Activated B cell treated with CpG ODN at 0.5 μM for 24 hours (primary cell): ENCODE measurements at regions of chr19 and their contacts with region 1.

Region 1: GRCh38 chr19:10730923-10731322 is 13.0 kb downstream of the DNM2 start:
- DNase-seq: no peak
- ATAC-seq: peak; percentile 20
- H3K4me3 Mint-ChIP-seq: peak overlapping the region; percentile 24
- H3K27ac Mint-ChIP-seq: peak overlapping the region; percentile 91
- H3K4me1 Mint-ChIP-seq: peaks cover 65% of the 10 kb centered on the region
- H3K27me3 Mint-ChIP-seq: no peaks in the 10 kb centered on the region
- CTCF ChIP-seq: no peak

Region 2: GRCh38 chr19:10416380-10417257 is 314.3 kb before region 1 on chr19:
- CTCF ChIA-PET with region 1: no interaction called
- POLR2A ChIA-PET with region 1: no interaction called
- intact Hi-C with region 1: no loop called
- DNase-seq: peak; percentile 97
- ATAC-seq: peak; percentile 68
- H3K4me3 Mint-ChIP-seq: peak overlapping the region; percentile 78
- H3K27ac Mint-ChIP-seq: peak overlapping the region; percentile 80
- H3K4me1 Mint-ChIP-seq: peaks cover 70% of the 10 kb centered on the region
- H3K27me3 Mint-ChIP-seq: peaks cover 29% of the 10 kb centered on the region
- CTCF ChIP-seq: peak; percentile 79

Region 3: GRCh38 chr19:10593820-10594637 is 136.9 kb before region 1 on chr19:
- CTCF ChIA-PET with region 1: no interaction called
- POLR2A ChIA-PET with region 1: no interaction called
- intact Hi-C with region 1: no loop called
- DNase-seq: no peak
- ATAC-seq: peak; percentile 51
- H3K4me3 Mint-ChIP-seq: peak overlapping the region; percentile 58
- H3K27ac Mint-ChIP-seq: peak overlapping the region; percentile 74
- H3K4me1 Mint-ChIP-seq: peaks cover 39% of the 10 kb centered on the region
- H3K27me3 Mint-ChIP-seq: no peaks in the 10 kb centered on the region
- CTCF ChIP-seq: no peak

Region 4: GRCh38 chr19:10662384-10663251 is 68.3 kb before region 1 on chr19:
- CTCF ChIA-PET with region 1: no interaction called
- POLR2A ChIA-PET with region 1: no interaction called
- intact Hi-C with region 1: no loop called
- DNase-seq: no peak
- ATAC-seq: peak; percentile 43
- H3K4me3 Mint-ChIP-seq: peak overlapping the region; percentile 67
- H3K27ac Mint-ChIP-seq: peak overlapping the region; percentile 43
- H3K4me1 Mint-ChIP-seq: peaks cover 58% of the 10 kb centered on the region
- H3K27me3 Mint-ChIP-seq: no peaks in the 10 kb centered on the region
- CTCF ChIP-seq: no peak

Region 5: DNA sequence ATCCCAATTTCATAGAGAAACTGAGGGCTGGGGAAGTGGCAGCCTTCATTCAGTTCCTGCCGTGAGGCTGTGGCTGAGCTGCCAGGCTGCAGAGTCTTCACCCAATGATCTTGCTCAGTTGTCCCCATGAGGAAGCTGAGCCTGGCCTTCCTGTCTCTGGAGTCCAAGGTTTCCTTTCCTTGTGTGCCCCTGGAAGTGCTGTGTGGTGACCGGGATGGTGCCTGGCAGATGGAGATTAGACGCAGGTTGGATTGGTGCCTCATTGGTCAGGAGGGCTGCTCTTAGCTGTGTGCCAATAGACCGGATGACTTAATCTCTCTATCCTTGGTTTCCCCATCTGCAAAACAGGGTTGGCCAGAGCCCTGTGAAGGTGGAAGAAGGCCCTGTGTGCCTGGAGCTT is 11.6 kb after region 1 on chr19:
- CTCF ChIA-PET with region 1: interaction called, 3 read pairs
- POLR2A ChIA-PET with region 1: interaction called, 5 read pairs
- intact Hi-C with region 1: loop called (anchors 1 kb)
- DNase-seq: no peak
- ATAC-seq: no peak
- H3K4me3 Mint-ChIP-seq: no peak overlapping the region
- H3K27ac Mint-ChIP-seq: no peak overlapping the region
- H3K4me1 Mint-ChIP-seq: peaks cover 76% of the 10 kb centered on the region
- H3K27me3 Mint-ChIP-seq: no peaks in the 10 kb centered on the region
- CTCF ChIP-seq: no peak

Region 6: GRCh38 chr19:10760273-10760944 is 29.5 kb after region 1 on chr19:
- CTCF ChIA-PET with region 1: interaction called, 3 read pairs
- POLR2A ChIA-PET with region 1: interaction called, 15 read pairs
- intact Hi-C with region 1: loop called (anchors 1 kb)
- DNase-seq: peak; percentile 57
- ATAC-seq: peak; percentile 69
- H3K4me3 Mint-ChIP-seq: peak overlapping the region; percentile 77
- H3K27ac Mint-ChIP-seq: peak overlapping the region; percentile 94
- H3K4me1 Mint-ChIP-seq: peaks cover 87% of the 10 kb centered on the region
- H3K27me3 Mint-ChIP-seq: no peaks in the 10 kb centered on the region
- CTCF ChIP-seq: no peak

Region 7: GRCh38 chr19:10776900-10777650 is 46.2 kb after region 1 on chr19:
- CTCF ChIA-PET with region 1: interaction called, 3 read pairs
- POLR2A ChIA-PET with region 1: interaction called, 9 read pairs
- intact Hi-C with region 1: loop called (anchors 2 kb)
- DNase-seq: no peak
- ATAC-seq: peak; percentile 82
- H3K4me3 Mint-ChIP-seq: peak overlapping the region; percentile 2
- H3K27ac Mint-ChIP-seq: peak overlapping the region; percentile 64
- H3K4me1 Mint-ChIP-seq: peaks cover 46% of the 10 kb centered on the region
- H3K27me3 Mint-ChIP-seq: no peaks in the 10 kb centered on the region
- CTCF ChIP-seq: no peak

Region 8: DNA sequence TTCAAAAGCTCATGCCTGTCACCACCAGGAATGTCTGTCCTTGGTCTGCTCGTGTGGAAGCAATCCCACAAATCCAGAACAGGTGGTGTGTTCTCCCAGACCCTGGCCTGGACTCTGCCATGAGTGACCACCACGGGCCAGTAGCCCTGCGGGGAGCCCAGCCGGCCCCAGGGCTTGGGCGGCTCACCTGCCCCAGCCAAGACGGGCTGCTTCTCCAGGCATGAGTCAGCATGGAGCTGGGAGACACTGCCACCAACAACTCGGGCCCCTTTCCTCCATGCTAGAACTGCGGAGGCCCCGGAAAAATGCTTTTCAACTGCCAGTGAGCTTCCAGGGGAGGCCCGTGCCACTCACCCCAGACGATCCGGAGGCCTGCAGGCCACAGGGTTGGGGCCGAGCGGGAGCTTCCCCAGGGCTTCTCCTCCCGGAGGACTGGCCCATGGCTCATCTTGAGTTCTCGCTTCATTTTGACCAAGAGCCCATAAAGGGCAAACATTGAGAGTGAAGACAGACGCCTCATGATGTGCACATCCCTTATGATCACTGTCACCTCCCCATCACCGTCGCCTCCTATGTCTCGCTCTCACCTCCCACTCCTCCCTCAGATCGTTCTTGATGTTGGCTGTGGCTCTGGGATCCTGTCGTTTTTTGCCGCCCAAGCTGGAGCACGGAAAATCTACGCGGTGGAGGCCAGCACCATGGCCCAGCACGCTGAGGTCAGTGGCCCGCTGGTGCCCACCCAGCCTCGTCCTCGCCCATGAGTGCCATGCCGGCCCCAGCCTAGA is 180.8 kb after region 1 on chr19:
- CTCF ChIA-PET with region 1: no interaction called
- POLR2A ChIA-PET with region 1: no interaction called
- intact Hi-C with region 1: no loop called
- DNase-seq: no peak
- ATAC-seq: no peak
- H3K4me3 Mint-ChIP-seq: no peak overlapping the region
- H3K27ac Mint-ChIP-seq: no peak overlapping the region
- H3K4me1 Mint-ChIP-seq: no peaks in the 10 kb centered on the region
- H3K27me3 Mint-ChIP-seq: no peaks in the 10 kb centered on the region
- CTCF ChIP-seq: no peak